Right lobe of liver (tissue), 6 donors: ENCODE measurements at regions of chr4 and their contacts with region 1.

Region 1: DNA sequence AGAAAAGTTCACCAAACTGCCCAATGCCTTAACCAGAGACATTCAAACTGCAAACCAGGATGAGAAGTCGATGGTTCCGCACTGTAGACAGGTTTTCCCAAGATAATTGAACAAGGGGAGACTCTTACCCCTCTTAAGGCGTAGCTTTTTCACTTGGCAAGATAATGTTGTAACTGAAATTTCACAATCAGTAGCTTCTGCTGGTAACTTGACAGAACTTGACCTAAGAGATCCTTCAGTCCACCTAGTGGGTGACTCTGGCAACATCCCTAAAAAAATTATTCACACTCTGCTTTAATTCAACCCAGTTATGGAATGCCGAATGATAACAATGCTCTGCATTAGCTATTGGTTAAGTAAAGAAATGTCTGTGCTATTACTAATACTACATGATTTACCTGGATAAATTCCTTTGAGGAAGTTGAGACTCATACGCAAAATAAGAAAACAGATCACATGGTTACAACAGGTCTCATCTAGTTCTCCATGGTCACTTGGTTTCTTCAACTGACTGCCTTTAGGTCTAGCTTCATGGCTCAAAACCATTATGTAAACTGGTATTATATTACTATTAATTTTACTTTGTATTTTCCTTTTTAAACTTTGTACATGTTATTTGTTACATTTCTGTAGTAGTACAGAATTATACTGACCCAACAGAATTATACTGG is 9.1 kb downstream of the ELF2 start:
- DNase-seq: peak in 1 of 3 donors; percentile 16
- ATAC-seq: peak; percentile 79 to 91 (median 88)
- H3K4me3 ChIP-seq: no peak overlapping the region
- H3K27ac ChIP-seq: peak overlapping the region in 1 of 3 donors; percentile 2
- H3K4me1 ChIP-seq: peaks cover 0 to 11% (median 5%) of the 10 kb centered on the region in 4 donors
- H3K27me3 ChIP-seq: no peaks in the 10 kb centered on the region
- CTCF ChIP-seq: peak; percentile 42 to 59 (median 50)
- POLR2A ChIP-seq: no peak

Region 2: GRCh38 chr4:139115226-139115625 is 52.7 kb before region 1 on chr4:
- intact Hi-C with region 1: loop called in 1 of 2 experiments (anchors 10 kb)
- DNase-seq: no peak
- ATAC-seq: peak in 1 of 4 donors; percentile 25
- H3K4me3 ChIP-seq: no peak overlapping the region
- H3K27ac ChIP-seq: no peak overlapping the region
- H3K4me1 ChIP-seq: no peaks in the 10 kb centered on the region
- H3K27me3 ChIP-seq: no peaks in the 10 kb centered on the region
- CTCF ChIP-seq: no peak
- POLR2A ChIP-seq: no peak

Region 3: GRCh38 chr4:139229534-139230039 is 61.7 kb after region 1 on chr4:
- intact Hi-C with region 1: no loop called
- DNase-seq: no peak
- ATAC-seq: peak; percentile 87 to 95 (median 88)
- H3K4me3 ChIP-seq: no peak overlapping the region
- H3K27ac ChIP-seq: no peak overlapping the region
- H3K4me1 ChIP-seq: no peaks in the 10 kb centered on the region
- H3K27me3 ChIP-seq: no peaks in the 10 kb centered on the region
- CTCF ChIP-seq: peak; percentile 74 to 79 (median 75)
- POLR2A ChIP-seq: no peak

Region 4: DNA sequence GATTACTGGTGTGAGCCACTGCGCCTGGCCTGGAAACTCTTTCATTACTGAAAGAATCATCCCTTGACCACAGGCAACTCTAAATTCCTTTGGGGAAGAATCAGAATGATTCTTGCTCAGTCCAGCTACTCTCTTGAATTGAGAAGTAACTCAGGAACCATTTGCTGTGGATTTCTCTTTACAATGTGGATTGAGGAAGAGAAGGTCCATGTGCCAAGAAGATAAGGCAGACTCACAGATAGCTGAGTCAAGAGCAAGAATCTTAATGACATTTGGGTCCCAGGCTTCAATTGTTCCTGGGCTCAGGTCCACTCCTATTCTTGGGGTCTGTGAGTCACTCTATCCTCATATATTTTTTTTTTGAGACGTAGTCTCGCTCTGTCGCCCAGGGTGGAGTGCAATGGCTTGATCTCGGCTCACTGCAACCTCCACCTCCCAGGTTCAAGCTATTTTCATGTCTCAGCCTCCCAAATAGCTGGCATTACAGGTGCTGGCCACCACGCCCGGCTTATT is 118.3 kb after region 1 on chr4:
- intact Hi-C with region 1: no loop called
- DNase-seq: no peak
- ATAC-seq: no peak
- H3K4me3 ChIP-seq: no peak overlapping the region
- H3K27ac ChIP-seq: no peak overlapping the region
- H3K4me1 ChIP-seq: no peaks in the 10 kb centered on the region
- H3K27me3 ChIP-seq: no peaks in the 10 kb centered on the region
- CTCF ChIP-seq: no peak
- POLR2A ChIP-seq: no peak

Region 5: GRCh38 chr4:139603576-139604387 is 435.9 kb after region 1 on chr4:
- intact Hi-C with region 1: no loop called
- DNase-seq: peak in 1 of 3 donors; percentile 53
- ATAC-seq: peak; percentile 78 to 85 (median 82)
- H3K4me3 ChIP-seq: no peak overlapping the region
- H3K27ac ChIP-seq: no peak overlapping the region
- H3K4me1 ChIP-seq: no peaks in the 10 kb centered on the region
- H3K27me3 ChIP-seq: no peaks in the 10 kb centered on the region
- CTCF ChIP-seq: peak; percentile 67 to 77 (median 70)
- POLR2A ChIP-seq: no peak